Ovary (tissue), 10 donors: ENCODE measurements at regions of chr15 and their contacts with region 1.

Region 1: GRCh38 chr15:78108299-78109084 is 16.1 kb downstream of the SH2D7 start:
- DNase-seq: peak; percentile 80 to 90 (median 86)
- H3K4me3 ChIP-seq: no peak overlapping the region
- H3K27ac ChIP-seq: no peak overlapping the region
- H3K4me1 ChIP-seq: no peaks in the 10 kb centered on the region
- H3K27me3 ChIP-seq: no peaks in the 10 kb centered on the region
- CTCF ChIP-seq: peak; percentile 85 to 96 (median 94)
- EP300 ChIP-seq: no peak
- POLR2A ChIP-seq: no peak

Region 2: DNA sequence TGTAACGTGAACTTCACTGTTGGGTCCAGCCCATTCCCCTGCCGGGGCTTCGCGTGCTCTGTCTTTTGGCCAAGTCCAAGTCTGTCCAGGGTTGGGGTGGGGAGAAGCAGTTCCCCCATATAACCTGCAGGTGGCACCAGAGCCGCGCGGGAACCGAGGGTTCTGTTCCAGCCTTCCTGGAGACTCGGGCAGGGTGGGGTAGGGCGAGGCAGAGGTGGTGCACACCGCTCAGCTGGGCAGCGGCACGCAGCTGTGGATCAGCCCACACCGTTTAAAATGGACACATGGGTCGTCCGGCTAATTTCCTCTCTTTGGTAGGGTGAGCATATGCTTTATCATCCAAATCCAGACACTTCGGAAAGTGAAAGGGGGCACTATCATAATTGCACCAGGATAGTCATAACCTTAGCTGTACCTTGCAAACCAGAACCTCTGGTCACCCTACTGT is 149.0 kb before region 1 on chr15:
- intact Hi-C with region 1: loop called in 1 of 4 experiments (anchors 2 kb)
- DNase-seq: peak; percentile 74 to 88 (median 85)
- H3K4me3 ChIP-seq: no peak overlapping the region
- H3K27ac ChIP-seq: no peak overlapping the region
- H3K4me1 ChIP-seq: peaks cover 2% of the 10 kb centered on the region
- H3K27me3 ChIP-seq: no peaks in the 10 kb centered on the region
- CTCF ChIP-seq: peak; percentile 79 to 91 (median 88)
- EP300 ChIP-seq: no peak
- POLR2A ChIP-seq: no peak

Region 3: GRCh38 chr15:77966540-77967290 is 141.8 kb before region 1 on chr15:
- intact Hi-C with region 1: loop called (anchors 2 to 5 kb)
- DNase-seq: peak in 2 of 5 donors; percentile 44 to 57
- H3K4me3 ChIP-seq: no peak overlapping the region
- H3K27ac ChIP-seq: no peak overlapping the region
- H3K4me1 ChIP-seq: peaks cover 1% of the 10 kb centered on the region
- H3K27me3 ChIP-seq: no peaks in the 10 kb centered on the region
- CTCF ChIP-seq: peak; percentile 59 to 81 (median 79)
- EP300 ChIP-seq: no peak
- POLR2A ChIP-seq: no peak

Region 4: DNA sequence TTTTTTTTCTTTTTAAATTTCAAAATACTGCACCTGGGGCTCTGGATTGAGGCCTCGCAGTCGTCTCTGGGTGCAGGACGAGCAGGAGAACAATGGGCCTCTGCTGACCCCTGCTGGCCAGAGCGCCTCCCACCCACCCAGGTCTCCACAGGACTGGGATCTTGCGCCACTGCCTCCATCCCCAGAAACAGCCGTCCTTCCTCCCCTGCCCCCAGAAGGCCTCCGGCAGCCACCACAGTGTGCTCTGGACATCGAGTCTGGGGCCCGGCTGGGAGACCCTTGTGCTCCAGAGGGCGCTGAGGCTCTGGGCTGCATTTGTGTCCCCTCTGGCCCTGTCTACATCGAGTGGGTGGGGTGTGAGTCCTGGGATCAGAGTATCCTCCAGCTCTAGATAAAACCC is 132.5 kb after region 1 on chr15:
- intact Hi-C with region 1: loop called in 2 of 4 experiments (anchors 2 to 5 kb)
- DNase-seq: peak; percentile 81 to 92 (median 90)
- H3K4me3 ChIP-seq: no peak overlapping the region
- H3K27ac ChIP-seq: no peak overlapping the region
- H3K4me1 ChIP-seq: no peaks in the 10 kb centered on the region
- H3K27me3 ChIP-seq: no peaks in the 10 kb centered on the region
- CTCF ChIP-seq: peak; percentile 23 to 84 (median 76)
- EP300 ChIP-seq: no peak
- POLR2A ChIP-seq: no peak

Region 5: DNA sequence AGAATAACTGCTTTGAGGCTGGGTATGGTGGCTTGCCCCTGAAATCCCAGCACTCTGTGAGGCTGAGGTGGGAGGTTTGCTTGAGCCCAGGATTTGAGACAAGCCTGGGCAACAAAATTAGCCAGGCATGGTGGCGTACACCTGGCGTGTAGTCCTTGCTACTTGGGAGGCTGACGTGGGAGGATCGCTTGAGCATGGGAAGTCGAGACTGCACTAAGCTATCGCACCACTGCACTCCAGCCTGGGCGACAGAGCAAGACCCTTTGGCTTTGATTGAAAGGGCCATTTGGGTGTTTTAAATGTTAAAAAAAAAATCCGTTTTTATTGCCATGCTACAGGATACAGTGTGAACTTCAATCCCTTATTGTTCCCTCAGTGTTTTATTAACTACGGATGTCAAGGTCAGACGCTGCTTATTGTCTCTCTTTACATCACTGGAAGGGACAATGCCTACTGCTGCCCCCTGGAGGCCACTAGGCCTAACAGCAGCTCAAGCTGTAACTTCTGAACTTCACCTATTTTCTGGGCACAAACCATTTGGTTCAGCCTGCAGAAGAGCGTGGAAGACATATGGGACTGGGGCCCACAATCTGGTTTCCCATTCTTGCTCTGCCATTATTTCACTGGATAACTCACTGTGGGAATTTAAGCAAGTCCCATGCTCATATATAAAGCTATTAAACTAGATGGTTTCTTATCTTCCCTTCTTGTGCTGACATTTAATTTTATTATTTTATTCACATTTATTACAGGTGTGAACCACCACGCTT is 314.3 kb after region 1 on chr15:
- intact Hi-C with region 1: loop called in 1 of 4 experiments (anchors 5 kb)
- DNase-seq: peak; percentile 15 to 69 (median 53)
- H3K4me3 ChIP-seq: no peak overlapping the region
- H3K27ac ChIP-seq: no peak overlapping the region
- H3K4me1 ChIP-seq: peaks cover 3% of the 10 kb centered on the region
- H3K27me3 ChIP-seq: no peaks in the 10 kb centered on the region
- CTCF ChIP-seq: peak; percentile 42 to 65 (median 58)
- EP300 ChIP-seq: no peak
- POLR2A ChIP-seq: no peak

Region 6: GRCh38 chr15:78481917-78482316 is 373.4 kb after region 1 on chr15:
- intact Hi-C with region 1: loop called in 1 of 4 experiments (anchors 5 kb)
- DNase-seq: no peak
- H3K4me3 ChIP-seq: no peak overlapping the region
- H3K27ac ChIP-seq: no peak overlapping the region
- H3K4me1 ChIP-seq: no peaks in the 10 kb centered on the region
- H3K27me3 ChIP-seq: no peaks in the 10 kb centered on the region
- CTCF ChIP-seq: no peak
- EP300 ChIP-seq: no peak
- POLR2A ChIP-seq: no peak